Activated naive CD4-positive, alpha-beta T cell treated with anti-CD3 and anti-CD28 coated beads, Interleukin-2, amount 10 ng/mL, durations not matched to agents 7 days and 5 days (primary cell): ENCODE measurements at regions of chr22 and their contacts with region 1.

Region 1: DNA sequence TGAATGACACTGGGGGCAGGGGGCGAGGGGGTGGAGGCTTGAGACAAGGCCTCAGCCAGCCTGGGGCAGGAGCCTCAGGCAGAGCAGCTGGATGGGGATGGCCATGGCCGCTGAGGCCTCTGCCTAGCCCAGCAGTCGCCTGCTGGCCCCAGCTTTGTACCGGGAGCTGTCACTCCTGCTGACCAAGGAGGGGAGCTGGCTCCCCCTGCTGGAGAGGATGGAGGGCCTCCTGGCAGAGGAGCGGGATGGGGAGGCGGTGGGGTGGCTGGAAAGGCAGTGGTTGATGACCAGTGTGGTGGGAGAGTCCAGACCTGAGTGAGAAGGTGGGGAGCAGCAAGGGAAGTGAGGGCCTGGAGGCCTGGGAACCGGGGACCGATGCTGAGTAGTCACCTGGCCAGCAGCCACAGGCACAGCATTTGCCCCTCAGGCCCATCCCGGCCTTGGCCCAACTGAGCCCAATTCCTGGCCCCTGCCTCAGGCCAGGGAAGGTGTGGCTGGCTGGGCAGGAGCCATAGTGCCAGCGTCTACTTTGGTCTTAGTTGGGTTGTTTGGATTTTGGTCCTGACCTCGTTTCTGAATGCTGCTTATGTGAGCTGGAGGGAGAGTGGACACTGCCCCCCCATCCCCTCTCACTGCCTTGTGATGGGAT is 6.0 kb upstream of the SUSD2 start:
- DNase-seq: peak; percentile 78
- H3K4me3 Mint-ChIP-seq: no peak overlapping the region
- H3K27ac Mint-ChIP-seq: peak overlapping the region; percentile 28
- H3K4me1 Mint-ChIP-seq: no peaks in the 10 kb centered on the region
- H3K27me3 Mint-ChIP-seq: no peaks in the 10 kb centered on the region

Region 2: GRCh38 chr22:24106385-24107381 is 68.6 kb before region 1 on chr22:
- CTCF ChIA-PET with region 1: interaction called, 17 read pairs
- DNase-seq: peak; percentile 55
- H3K4me3 Mint-ChIP-seq: no peak overlapping the region
- H3K27ac Mint-ChIP-seq: peak overlapping the region; percentile 73
- H3K4me1 Mint-ChIP-seq: peaks cover 33% of the 10 kb centered on the region
- H3K27me3 Mint-ChIP-seq: no peaks in the 10 kb centered on the region

Region 3: DNA sequence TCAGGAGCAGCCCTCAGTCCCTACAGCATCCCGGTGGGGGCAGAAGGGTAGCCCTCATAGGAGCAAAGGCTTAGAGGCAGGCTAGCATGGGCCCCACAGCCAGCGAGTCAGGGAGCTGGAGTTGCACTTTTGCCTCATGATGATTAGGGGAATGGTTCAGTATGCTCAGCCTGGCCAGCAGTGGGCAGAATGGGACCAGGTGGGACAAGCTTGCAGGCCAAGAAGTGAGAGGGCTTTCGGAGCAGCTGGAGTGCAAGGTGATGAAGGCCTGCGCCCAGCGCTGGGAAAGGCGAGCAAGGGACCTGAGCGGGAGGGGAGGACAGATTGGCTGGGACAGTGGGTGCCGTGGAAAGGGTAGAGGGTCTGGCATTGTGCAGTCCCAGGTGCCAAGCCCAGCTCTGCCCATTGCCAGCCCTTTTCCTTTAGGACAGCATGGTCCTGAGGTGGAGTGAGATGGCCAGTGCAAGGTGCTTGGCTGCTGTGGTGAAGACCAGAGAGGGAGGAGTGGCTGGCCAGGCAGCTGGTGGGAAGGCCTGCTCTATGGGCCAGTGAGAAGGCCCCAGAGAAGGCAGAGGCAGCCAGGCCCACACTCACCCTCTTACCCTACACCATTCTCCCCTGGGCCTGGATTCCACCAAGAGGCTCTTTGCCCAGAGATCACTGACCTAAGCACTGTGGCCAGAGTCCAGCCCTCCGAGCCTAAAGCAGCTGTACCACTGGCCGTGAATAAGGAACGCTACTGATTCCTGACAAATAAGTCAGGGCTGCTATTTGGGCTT is 41.9 kb before region 1 on chr22:
- CTCF ChIA-PET with region 1: interaction called, 11 read pairs
- DNase-seq: peak; percentile 63
- H3K4me3 Mint-ChIP-seq: no peak overlapping the region
- H3K27ac Mint-ChIP-seq: peak overlapping the region; percentile 80
- H3K4me1 Mint-ChIP-seq: peaks cover 13% of the 10 kb centered on the region
- H3K27me3 Mint-ChIP-seq: no peaks in the 10 kb centered on the region